AG04449 (cell line): ENCODE measurements at regions of chr12 and their contacts with region 1.

Region 1: GRCh38 chr12:98572010-98572409 is 21.5 kb upstream of the SLC25A3 start:
- DNase-seq: no peak
- H3K4me3 ChIP-seq: no peak overlapping the region
- CTCF ChIP-seq: peak; percentile 10

Region 2: GRCh38 chr12:98532681-98533304 is 39.2 kb before region 1 on chr12:
- CTCF ChIA-PET with region 1: interaction called, 15 read pairs
- POLR2A ChIA-PET with region 1: no interaction called
- DNase-seq: no peak
- H3K4me3 ChIP-seq: no peak overlapping the region
- CTCF ChIP-seq: peak; percentile 29

Region 3: DNA sequence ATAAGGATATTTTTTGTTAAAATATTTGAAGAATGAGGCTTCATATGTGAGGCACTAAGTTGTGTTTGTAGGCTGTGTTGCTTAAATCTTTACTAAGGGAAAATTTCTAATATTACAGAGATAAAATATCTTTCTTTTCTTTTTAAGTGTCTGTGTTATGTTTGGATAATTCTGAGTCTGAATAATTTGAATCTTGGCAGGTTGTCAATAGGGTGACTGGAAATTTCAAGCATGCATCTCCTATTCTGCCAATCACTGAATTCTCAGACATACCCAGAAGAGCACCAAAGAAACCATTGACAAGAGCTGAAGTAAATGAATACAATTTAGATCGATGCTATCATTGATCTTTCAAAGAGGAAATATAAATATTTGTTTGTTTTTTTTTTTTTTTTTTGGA is 27.3 kb before region 1 on chr12:
- CTCF ChIA-PET with region 1: interaction called, 59 read pairs
- POLR2A ChIA-PET with region 1: no interaction called
- DNase-seq: no peak
- H3K4me3 ChIP-seq: no peak overlapping the region
- CTCF ChIP-seq: no peak

Region 4: GRCh38 chr12:98559666-98560065 is 12.3 kb before region 1 on chr12:
- CTCF ChIA-PET with region 1: interaction called, 14 read pairs
- POLR2A ChIA-PET with region 1: no interaction called
- DNase-seq: no peak
- H3K4me3 ChIP-seq: no peak overlapping the region
- CTCF ChIP-seq: no peak

Region 5: GRCh38 chr12:98639491-98639890 is 67.5 kb after region 1 on chr12:
- CTCF ChIA-PET with region 1: interaction called, 12 read pairs
- POLR2A ChIA-PET with region 1: no interaction called
- DNase-seq: no peak
- H3K4me3 ChIP-seq: no peak overlapping the region
- CTCF ChIP-seq: no peak

Region 6: GRCh38 chr12:98814254-98814653 is 242.2 kb after region 1 on chr12:
- CTCF ChIA-PET with region 1: no interaction called
- POLR2A ChIA-PET with region 1: no interaction called
- DNase-seq: no peak
- H3K4me3 ChIP-seq: no peak overlapping the region
- CTCF ChIP-seq: no peak